OCI-LY7 (cell line): ENCODE measurements at regions of chr1 and their contacts with region 1.

Region 1: DNA sequence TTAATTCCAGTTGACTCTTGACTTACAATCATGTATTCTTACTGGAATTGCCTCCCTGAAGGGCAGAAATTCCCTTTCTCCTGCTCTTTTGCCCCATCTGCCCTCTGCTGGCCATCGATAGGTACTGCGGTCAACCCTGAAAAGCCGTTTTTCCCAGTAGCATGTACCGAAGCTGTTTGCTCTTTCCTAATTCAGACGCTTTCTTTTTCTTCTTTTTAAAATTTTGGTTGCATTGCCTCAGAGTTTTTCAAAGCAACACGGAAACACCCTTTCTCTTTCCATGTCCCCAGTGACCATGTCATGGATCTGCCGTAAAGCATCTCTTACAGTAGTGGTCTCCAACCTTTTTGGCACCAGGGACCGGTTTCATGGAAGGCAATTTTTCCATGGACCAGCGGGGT is 164.2 kb upstream of the C1orf21 start:
- DNase-seq: peak; percentile 39
- H3K4me3 ChIP-seq: no peak overlapping the region
- H3K27ac ChIP-seq: no peak overlapping the region
- H3K4me1 ChIP-seq: no peaks in the 10 kb centered on the region
- CTCF ChIP-seq: peak; percentile 89

Region 2: GRCh38 chr1:184075055-184076029 is 147.3 kb before region 1 on chr1:
- CTCF ChIA-PET with region 1: interaction called, 3 read pairs
- POLR2A ChIA-PET with region 1: no interaction called
- intact Hi-C with region 1: loop called (anchors 1 kb)
- DNase-seq: peak; percentile 49
- H3K4me3 ChIP-seq: no peak overlapping the region
- H3K27ac ChIP-seq: no peak overlapping the region
- H3K4me1 ChIP-seq: no peaks in the 10 kb centered on the region
- CTCF ChIP-seq: peak; percentile 84